ENCODE measurements at regions of chr13 and their contacts with region 1.

Region 1: DNA sequence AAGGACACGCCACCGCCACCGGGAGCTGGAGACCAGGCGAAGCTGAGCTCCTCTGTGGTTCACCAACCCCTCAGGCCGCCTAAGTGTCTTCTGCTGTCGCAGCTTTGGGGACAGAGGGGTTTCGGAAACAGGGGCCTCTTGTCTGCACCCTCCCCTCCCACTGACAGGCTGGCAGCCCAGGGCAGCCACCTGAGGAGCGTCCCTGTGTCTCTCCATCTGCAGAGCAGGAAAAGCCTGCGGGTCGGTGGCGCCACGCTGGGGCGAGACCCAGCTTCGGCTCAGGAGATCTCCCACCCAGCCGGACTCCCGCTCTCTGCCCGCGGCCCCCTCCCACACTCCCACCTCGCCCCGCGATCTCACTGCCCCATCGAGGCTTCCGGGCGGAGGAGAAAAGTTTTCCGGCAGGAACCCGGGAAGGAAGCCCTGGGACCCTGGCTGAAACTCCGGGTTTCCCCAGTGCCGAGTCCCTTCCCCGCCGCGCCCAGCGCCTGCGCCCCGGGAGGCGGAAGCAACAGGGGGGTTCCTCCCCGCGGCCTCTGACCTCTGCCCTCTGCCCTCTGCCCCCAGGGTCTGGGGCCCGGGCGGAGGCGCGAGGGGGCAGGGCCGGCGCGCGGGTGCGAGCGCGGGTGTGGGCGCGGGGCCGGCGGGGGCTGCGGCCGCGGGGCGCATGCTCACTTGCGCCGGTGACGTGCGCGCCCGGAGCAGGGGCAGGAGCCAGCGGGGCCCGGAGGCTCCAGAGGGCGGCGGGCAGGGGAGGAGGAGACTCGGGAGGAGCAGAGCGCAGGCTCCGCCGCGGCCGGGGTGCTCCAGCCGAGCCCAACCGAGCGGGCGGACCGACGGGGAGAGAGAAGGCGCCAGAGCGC is at the start of gene ATP11A:
- DNase-seq: peak; percentile 47
- ATAC-seq: peak; percentile 94
- H3K4me3 ChIP-seq: peak within 1 kb of the TSS; percentile 68 to 78
- H3K27ac ChIP-seq: peak within 1 kb of the TSS; percentile 89
- H3K4me1 ChIP-seq: peaks cover 10 to 35% of the 10 kb centered on the region in 2 experiments
- H3K27me3 ChIP-seq: no peaks in the 10 kb centered on the region
- CTCF ChIP-seq: no peak
- POLR2A ChIP-seq: no peak
- RAD21 ChIP-seq: no peak
- total RNA-seq, gene ATP11A: 80.4 TPM

Region 2: GRCh38 chr13:112711528-112712265 is 22.2 kb after region 1 on chr13:
- CTCF ChIA-PET with region 1: no interaction called
- POLR2A ChIA-PET with region 1: no interaction called
- RAD21 ChIA-PET with region 1: no interaction called
- intact Hi-C with region 1: loop called (anchors 2 kb)
- DNase-seq: peak; percentile 85
- ATAC-seq: peak; percentile 97
- H3K4me3 ChIP-seq: peak overlapping the region; percentile 31 to 49
- H3K27ac ChIP-seq: peak overlapping the region; percentile 87
- H3K4me1 ChIP-seq: peaks cover 51 to 55% of the 10 kb centered on the region in 2 experiments
- H3K27me3 ChIP-seq: no peaks in the 10 kb centered on the region
- CTCF ChIP-seq: peak in 1 of 3 experiments; percentile 31; a peak in 2 of 6 replicates
- POLR2A ChIP-seq: no peak
- RAD21 ChIP-seq: no peak

Region 3: DNA sequence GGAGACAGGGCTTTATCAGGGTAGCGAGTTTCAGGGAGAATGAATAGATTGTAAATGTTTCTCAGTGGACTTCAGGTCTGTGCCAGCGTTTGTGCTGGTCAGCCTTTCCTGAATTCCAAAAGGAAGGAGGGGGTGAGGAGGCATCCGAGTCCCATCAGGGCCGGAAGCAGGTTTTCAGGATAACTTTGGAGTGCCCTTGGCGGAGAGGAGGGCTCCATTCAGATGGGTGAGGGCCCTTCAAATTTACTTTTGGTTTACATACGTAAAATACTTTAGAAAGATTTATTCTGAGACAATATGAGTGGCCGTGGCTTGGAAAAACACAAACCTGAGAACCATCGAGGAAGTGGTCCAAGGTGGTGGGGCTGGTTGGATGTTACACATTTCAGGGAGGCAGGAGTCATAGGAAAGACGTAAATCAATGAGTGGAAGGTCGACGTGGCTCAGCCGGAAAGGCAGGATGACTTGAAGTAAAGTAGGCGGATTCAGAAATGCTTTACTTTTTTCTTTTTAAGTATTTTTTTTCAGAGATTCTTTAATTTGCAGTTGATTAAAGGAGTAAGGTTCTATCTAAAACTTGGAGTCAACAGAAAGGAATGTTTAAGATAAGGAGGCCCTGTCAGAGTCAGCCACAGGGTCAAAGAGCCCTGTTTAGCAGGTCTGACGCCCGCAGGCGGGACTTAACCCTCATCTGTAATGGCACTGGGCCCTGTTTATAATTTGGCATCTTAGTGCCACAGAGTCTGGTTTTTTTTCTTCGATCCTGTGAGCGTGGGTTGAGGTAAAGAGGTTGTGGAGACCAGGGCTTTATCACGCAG is 33.1 kb after region 1 on chr13:
- CTCF ChIA-PET with region 1: no interaction called
- POLR2A ChIA-PET with region 1: no interaction called
- RAD21 ChIA-PET with region 1: no interaction called
- intact Hi-C with region 1: loop called (anchors 2 kb)
- DNase-seq: peak; percentile 86
- ATAC-seq: peak; percentile 75
- H3K4me3 ChIP-seq: peak overlapping the region; percentile 3 to 36
- H3K27ac ChIP-seq: peak overlapping the region; percentile 95
- H3K4me1 ChIP-seq: peaks cover 67 to 80% of the 10 kb centered on the region in 2 experiments
- H3K27me3 ChIP-seq: no peaks in the 10 kb centered on the region
- CTCF ChIP-seq: no peak
- POLR2A ChIP-seq: no peak
- RAD21 ChIP-seq: no peak

Region 4: DNA sequence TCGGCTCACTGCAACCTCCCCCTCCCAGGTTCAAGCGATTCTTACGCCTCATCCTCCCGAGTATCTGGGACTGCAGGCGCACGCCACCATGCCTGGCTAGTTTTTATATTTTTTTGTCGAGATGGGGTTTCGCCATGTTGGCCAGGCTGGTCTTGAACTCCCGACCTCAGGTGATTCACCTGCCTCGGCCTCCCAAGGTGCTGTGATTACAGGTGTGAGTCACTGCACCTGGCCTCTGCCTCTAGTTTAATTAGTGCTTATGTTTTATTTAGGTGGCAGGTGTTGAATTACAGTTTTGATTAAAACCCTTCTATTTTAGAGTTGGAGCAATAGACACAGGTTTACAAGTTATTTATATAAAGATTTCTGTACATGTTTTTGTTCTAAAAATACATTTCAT is 43.1 kb after region 1 on chr13:
- CTCF ChIA-PET with region 1: no interaction called
- POLR2A ChIA-PET with region 1: no interaction called
- RAD21 ChIA-PET with region 1: no interaction called
- intact Hi-C with region 1: no loop called
- DNase-seq: no peak
- ATAC-seq: peak; percentile 73
- H3K4me3 ChIP-seq: no peak overlapping the region; a peak in 1 of 4 replicates
- H3K27ac ChIP-seq: no peak overlapping the region
- H3K4me1 ChIP-seq: peaks cover 29 to 31% of the 10 kb centered on the region in 2 experiments
- H3K27me3 ChIP-seq: no peaks in the 10 kb centered on the region
- CTCF ChIP-seq: no peak
- POLR2A ChIP-seq: no peak
- RAD21 ChIP-seq: no peak

Region 5: GRCh38 chr13:113639616-113640262 is 950.2 kb after region 1 on chr13:
- CTCF ChIA-PET with region 1: no interaction called
- POLR2A ChIA-PET with region 1: no interaction called
- RAD21 ChIA-PET with region 1: no interaction called
- intact Hi-C with region 1: no loop called
- DNase-seq: no peak
- ATAC-seq: no peak
- H3K4me3 ChIP-seq: no peak overlapping the region
- H3K27ac ChIP-seq: no peak overlapping the region
- H3K4me1 ChIP-seq: no peaks in the 10 kb centered on the region
- H3K27me3 ChIP-seq: no peaks in the 10 kb centered on the region
- CTCF ChIP-seq: no peak
- POLR2A ChIP-seq: no peak
- RAD21 ChIP-seq: no peak

Measured in HCT116 (cell line).